ENCODE measurements at regions of chrX and their contacts with region 1.

Region 1: DNA sequence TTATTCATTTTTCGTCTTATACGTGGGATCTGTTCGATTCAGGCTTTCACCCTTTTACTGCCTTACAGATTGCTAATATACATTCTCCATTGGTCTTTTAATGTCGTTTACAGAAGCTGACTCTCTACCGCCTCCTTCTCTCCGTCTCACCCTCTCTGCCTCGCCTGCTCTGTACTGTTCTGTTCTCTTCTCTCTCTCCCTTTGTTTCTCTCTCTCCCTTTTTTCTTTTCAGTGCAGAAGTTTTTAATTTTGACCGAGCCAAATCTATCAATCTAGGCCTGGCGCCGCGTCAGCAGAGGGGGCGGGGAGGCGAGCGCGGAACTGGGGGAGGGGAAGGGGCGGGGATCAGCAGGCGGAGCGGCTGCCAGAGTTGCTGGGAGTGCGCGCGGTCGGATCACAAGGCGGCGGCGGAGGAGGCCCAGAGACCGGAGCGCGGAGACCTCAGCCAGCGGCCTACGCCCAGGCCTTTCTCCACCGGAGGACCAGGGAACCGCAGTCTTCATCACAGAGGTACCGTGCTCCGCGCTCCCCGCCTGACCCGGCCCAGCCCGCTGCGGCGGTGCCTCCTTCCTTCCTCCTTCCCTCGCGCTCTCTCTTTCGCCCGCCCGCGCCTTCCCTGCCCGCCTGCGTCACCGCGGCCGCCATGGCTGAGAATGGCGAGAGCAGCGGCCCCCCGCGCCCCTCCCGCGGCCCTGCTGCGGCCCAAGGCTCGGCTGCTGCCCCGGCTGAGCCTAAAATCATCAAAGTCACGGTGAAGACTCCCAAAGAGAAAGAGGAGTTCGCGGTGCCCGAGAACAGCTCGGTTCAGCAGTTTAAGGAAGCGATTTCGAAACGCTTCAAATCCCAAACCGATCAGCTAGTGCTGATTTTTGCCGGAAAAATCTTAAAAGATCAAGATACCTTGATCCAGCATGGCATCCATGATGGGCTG is at the start of gene UBQLN2:
- DNase-seq: peak; percentile 79
- H3K4me3 ChIP-seq: peak within 1 kb of the TSS; percentile 84
- H3K27ac ChIP-seq: peak within 1 kb of the TSS; percentile 91
- H3K4me1 ChIP-seq: peaks cover 15% of the 10 kb centered on the region
- CTCF ChIP-seq: peak; percentile 50
- total RNA-seq, gene UBQLN2: 7.4 and 9.6 TPM in 2 replicates

Region 2: DNA sequence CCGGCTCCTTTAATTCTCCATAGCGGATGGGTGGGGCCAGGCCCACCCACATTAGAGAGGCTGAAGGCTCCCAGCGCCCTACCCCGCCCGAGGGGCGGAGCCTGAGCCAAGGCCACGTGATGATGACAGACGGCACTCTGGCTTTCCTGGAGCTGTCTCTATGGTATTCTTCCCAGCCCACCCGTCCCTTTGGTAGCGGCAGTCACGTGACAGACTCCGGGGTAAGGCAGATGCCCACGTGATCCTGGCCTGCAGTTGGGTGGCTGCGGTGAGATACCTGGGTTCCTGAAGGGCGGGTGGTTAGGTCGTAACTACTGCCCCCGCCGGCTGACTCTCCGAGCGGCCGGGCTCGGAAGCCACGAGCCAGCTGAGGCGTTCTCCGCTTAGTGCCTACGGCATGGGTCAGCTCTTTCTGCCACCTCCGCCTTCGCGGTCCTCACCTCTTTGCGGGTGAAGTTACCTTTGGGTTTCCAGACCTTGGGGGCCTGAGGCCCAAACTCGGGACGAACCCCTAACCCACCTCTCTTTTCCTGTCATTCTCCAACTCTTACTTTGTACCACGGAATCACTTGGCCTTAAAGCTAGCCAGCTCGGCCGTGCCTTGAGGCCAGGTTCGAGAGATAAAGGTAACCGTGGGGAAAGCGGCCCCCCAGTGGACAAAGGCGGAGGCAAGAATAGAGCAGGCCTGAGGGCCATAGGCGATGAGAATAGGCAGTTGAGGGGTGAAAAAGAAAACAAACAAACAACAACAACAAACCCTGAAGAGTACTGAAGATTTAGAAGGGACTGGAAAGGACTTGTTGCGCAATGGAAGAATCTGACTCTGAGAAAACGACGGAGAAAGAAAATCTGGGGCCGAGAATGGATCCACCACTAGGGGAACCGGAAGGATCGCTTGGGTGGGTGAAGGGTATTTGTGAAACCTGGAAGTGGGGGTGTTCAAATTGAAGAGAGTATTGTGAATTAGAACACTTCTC is 845.7 kb before region 1 on chrX and contains the start of gene RRAGB:
- CTCF ChIA-PET with region 1: no interaction called
- POLR2A ChIA-PET with region 1: no interaction called
- intact Hi-C with region 1: loop called (anchors 10 kb)
- DNase-seq: peak; percentile 94
- H3K4me3 ChIP-seq: peak within 1 kb of the TSS; percentile 85
- H3K27ac ChIP-seq: peak within 1 kb of the TSS; percentile 66
- H3K4me1 ChIP-seq: peaks cover 10% of the 10 kb centered on the region
- CTCF ChIP-seq: peak; percentile 83
- total RNA-seq, gene RRAGB: 9.6 and 10.4 TPM in 2 replicates

Region 3: GRCh38 chrX:56550667-56551066 is 12.8 kb before region 1 on chrX:
- CTCF ChIA-PET with region 1: no interaction called
- POLR2A ChIA-PET with region 1: no interaction called
- intact Hi-C with region 1: no loop called
- DNase-seq: no peak
- H3K4me3 ChIP-seq: no peak overlapping the region
- H3K27ac ChIP-seq: no peak overlapping the region
- H3K4me1 ChIP-seq: no peaks in the 10 kb centered on the region
- CTCF ChIP-seq: no peak

Region 4: GRCh38 chrX:56729152-56729850 is 165.8 kb after region 1 on chrX and contains the start of gene NBDY:
- CTCF ChIA-PET with region 1: no interaction called
- POLR2A ChIA-PET with region 1: interaction called, 6 read pairs
- intact Hi-C with region 1: loop called (anchors 2 kb)
- DNase-seq: peak; percentile 67
- H3K4me3 ChIP-seq: peak within 1 kb of the TSS; percentile 85
- H3K27ac ChIP-seq: peak within 1 kb of the TSS; percentile 64
- H3K4me1 ChIP-seq: peaks cover 16% of the 10 kb centered on the region
- CTCF ChIP-seq: no peak
- total RNA-seq, gene NBDY: 5.4 and 6.3 TPM in 2 replicates

Region 5: DNA sequence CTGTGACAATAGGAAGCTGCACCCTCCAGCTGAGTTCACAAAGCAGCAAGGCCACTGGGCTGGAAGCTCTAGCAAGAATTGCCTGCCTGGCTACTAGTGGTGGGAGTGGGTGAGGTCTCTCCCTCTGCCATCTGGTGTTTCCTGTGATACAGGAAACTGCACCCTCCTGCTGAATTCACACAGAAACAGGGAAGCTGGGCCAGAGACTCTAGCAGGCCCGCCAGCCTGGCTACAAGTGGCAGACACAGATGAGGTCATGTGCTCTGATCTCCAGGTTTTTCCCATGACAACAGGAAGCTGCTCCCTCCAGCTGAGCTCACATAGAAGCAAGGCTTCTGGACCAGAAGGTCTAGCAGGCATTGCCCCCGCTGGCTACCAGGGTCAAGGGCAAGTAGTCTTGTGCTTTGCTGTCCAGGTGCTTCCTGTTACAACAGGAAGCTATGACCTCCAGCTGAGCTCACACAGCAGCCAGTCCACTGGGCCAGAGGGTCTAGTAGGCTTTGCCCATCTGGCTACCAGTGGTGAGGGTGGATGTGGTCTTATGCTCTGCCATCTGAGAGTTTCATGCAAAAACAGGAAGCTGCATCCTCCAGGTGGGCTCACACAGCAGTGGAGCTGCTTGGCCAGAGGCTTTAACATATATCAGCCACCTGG is 1388.3 kb after region 1 on chrX:
- CTCF ChIA-PET with region 1: no interaction called
- POLR2A ChIA-PET with region 1: no interaction called
- intact Hi-C with region 1: loop called (anchors 10 kb)
- DNase-seq: peak; percentile 94
- H3K4me3 ChIP-seq: peak overlapping the region; percentile 45
- H3K27ac ChIP-seq: peak overlapping the region; percentile 97
- H3K4me1 ChIP-seq: peaks cover 35% of the 10 kb centered on the region
- CTCF ChIP-seq: no peak

Measured in OCI-LY7 (cell line).